Right ventricle myocardium inferior (tissue), 1 donor: ENCODE measurements at regions of chr2 and their contacts with region 1.

Region 1: GRCh38 chr2:133886735-133887660 is 318.7 kb upstream of the NCKAP5 start:
- DNase-seq: peak; percentile 79
- ATAC-seq: peak; percentile 76

Region 2: GRCh38 chr2:133705287-133705686 is 181.7 kb before region 1 on chr2:
- intact Hi-C with region 1: no loop called
- DNase-seq: no peak
- ATAC-seq: no peak

Region 3: DNA sequence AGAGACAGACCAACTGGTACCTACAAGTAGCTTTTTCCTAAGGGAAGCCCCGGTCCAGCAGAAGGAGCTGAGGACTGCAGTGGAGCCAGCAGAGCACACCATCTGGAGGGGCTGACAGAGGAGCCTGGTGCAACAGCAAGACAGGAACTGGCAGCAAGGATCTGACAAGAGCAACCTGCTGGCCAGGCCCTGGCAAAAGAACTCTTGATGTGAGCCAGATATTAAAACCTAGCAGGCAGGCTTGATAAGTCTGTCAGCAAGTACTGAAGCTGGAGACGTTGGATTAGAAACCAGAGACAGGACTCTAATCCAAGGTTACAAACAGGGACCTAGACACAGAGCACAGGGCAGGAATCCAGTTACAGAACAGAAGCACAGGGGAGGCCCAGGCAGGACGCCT is 106.2 kb after region 1 on chr2:
- intact Hi-C with region 1: loop called (anchors 5 kb)
- DNase-seq: no peak
- ATAC-seq: peak; percentile 85

Region 4: GRCh38 chr2:134261398-134262131 is 374.6 kb after region 1 on chr2:
- intact Hi-C with region 1: loop called (anchors 10 kb)
- DNase-seq: no peak
- ATAC-seq: peak; percentile 41

Region 5: GRCh38 chr2:134411828-134412638 is 525.0 kb after region 1 on chr2:
- intact Hi-C with region 1: loop called (anchors 5 kb)
- DNase-seq: no peak
- ATAC-seq: peak; percentile 96

Region 6: DNA sequence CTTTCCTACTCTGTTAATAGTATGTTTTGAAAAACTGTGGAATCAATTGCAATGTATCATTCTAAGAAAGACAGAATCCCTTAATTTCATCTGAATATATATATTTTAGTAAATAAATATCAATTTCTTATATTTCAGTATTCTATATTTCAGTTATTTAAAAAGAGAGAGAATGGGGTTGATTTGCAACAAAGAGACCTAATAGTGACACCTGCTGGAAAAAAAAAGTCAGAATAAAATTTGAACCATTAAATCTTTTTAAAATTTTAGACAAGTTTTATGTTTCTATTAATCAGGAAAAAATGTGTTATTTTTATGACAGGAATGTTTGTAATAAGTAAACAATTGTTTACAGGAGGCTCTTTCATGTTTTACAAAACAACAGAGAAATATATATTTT is 1010.9 kb after region 1 on chr2:
- intact Hi-C with region 1: loop called (anchors 10 kb)
- DNase-seq: no peak
- ATAC-seq: no peak